Heart right ventricle (tissue), 16 donors: ENCODE measurements at regions of chr4 and their contacts with region 1.

Region 1: DNA sequence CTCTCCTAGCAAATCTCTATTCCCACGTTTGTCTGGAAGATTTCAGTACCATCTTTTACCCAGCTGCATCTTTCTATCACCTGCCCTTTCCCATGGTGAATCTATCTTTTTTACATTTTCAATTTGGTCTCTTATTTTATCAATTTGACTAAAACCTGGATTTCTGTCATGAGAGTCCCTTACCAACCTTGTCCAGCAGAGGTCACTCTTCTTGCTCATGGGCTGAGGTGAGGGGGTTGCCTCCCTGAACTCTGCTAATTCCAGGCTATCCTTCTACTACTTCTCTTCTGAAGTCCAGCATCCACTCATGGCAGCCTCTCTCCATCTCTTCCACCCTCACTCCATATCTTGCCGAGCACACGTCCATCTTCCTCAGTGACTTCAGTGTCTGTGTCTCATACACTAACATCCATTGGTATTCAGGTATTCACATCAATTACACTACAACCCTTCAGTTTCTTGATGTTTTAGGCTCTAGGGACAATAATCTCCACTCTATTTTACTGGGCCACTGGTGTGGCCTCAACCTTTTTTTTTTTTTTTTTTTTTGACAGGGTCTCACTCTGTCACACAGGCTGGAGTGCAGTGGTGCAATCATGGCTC is 17.8 kb upstream of the ZNF827 start:
- DNase-seq: peak in 1 of 2 donors; percentile 23
- ATAC-seq: peak in 2 of 8 donors; percentile 37 to 38
- H3K4me3 ChIP-seq: no peak overlapping the region
- H3K27ac ChIP-seq: no peak overlapping the region
- H3K4me1 ChIP-seq: no peaks in the 10 kb centered on the region
- H3K27me3 ChIP-seq: no peaks in the 10 kb centered on the region
- CTCF ChIP-seq: peak; percentile 53 to 82 (median 75)

Region 2: GRCh38 chr4:145912376-145912775 is 44.0 kb before region 1 on chr4:
- intact Hi-C with region 1: no loop called
- DNase-seq: no peak
- ATAC-seq: no peak
- H3K4me3 ChIP-seq: no peak overlapping the region
- H3K27ac ChIP-seq: no peak overlapping the region
- H3K4me1 ChIP-seq: peaks cover 5 to 52% (median 33%) of the 10 kb centered on the region in 9 donors
- H3K27me3 ChIP-seq: no peaks in the 10 kb centered on the region
- CTCF ChIP-seq: no peak

Region 3: GRCh38 chr4:146059865-146060264 is 103.5 kb after region 1 on chr4:
- intact Hi-C with region 1: no loop called
- DNase-seq: no peak
- ATAC-seq: no peak
- H3K4me3 ChIP-seq: no peak overlapping the region
- H3K27ac ChIP-seq: no peak overlapping the region
- H3K4me1 ChIP-seq: peaks cover 0 to 11% (median 0%) of the 10 kb centered on the region in 9 donors
- H3K27me3 ChIP-seq: peaks cover 0 to 13% (median 4%) of the 10 kb centered on the region in 7 donors
- CTCF ChIP-seq: no peak

Region 4: GRCh38 chr4:146087856-146088255 is 131.5 kb after region 1 on chr4:
- intact Hi-C with region 1: no loop called
- DNase-seq: no peak
- ATAC-seq: no peak
- H3K4me3 ChIP-seq: no peak overlapping the region
- H3K27ac ChIP-seq: no peak overlapping the region
- H3K4me1 ChIP-seq: no peaks in the 10 kb centered on the region
- H3K27me3 ChIP-seq: no peaks in the 10 kb centered on the region
- CTCF ChIP-seq: no peak

Region 5: DNA sequence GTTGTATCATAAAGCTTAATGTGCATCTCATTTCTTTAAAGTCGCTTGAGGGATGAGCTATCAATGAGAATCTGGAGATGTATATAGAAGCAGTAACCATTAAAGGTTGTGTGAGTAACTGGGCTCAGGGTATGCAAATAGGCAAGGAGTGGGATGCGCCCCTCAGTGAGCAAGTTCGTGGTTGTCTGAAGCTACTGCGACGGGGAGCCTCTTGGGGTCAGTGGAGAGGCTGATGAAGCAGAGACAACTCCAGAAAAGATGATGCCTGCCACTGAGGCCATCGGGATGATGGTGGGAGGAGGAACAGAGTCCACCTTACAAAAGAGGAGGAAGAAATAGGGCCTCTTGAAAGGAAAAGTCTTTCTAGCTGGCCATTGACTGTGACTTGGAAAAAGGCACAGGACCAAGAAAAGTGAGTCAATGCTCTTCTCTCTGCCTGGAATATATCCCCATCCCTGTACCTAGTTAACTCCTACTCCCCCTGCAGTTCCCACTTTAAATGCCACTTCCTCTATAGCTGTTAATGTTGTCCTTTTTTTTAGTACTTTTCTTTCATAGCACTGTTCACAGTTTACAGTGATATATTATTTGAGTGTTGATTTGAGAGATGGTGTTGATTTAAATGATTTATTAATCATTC is 167.8 kb after region 1 on chr4:
- intact Hi-C with region 1: no loop called
- DNase-seq: no peak
- ATAC-seq: no peak
- H3K4me3 ChIP-seq: no peak overlapping the region
- H3K27ac ChIP-seq: no peak overlapping the region
- H3K4me1 ChIP-seq: no peaks in the 10 kb centered on the region
- H3K27me3 ChIP-seq: no peaks in the 10 kb centered on the region
- CTCF ChIP-seq: no peak

Region 6: DNA sequence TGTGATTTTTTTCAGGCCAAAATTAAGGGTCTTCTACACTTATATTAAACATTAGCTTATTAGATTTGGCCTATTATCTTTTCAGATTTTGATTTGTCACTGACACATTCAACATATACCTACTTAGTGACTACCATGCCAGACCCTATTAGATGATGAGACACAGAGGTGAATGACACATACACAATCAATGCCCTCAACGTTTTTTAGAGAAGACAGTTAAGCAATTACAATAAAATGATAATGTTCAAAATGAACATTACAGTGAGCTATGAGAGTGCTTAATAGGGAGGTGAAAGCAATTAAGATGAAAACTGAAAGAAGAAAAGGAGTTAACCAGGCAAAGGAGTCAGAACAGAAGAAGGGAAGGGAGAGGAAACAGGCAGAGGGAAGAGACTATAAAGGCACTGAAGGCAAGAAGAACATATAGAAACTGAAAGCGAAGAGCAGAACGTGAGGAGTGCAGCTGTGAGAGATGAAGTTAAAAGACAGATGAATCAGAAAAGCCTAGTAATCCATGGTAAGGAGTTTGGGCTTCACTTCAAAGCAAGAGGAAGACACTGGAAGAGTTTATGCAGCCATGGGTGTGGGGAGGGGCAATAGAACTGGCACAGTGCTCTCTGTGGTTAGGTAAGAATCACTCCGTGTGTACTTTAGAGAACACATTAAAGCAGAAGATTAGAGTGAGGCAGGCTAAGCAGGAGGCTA is 377.0 kb after region 1 on chr4:
- intact Hi-C with region 1: loop called in 1 of 10 experiments (anchors 10 kb)
- DNase-seq: no peak
- ATAC-seq: no peak
- H3K4me3 ChIP-seq: no peak overlapping the region
- H3K27ac ChIP-seq: no peak overlapping the region
- H3K4me1 ChIP-seq: peaks cover 0 to 49% (median 3%) of the 10 kb centered on the region in 9 donors
- H3K27me3 ChIP-seq: no peaks in the 10 kb centered on the region
- CTCF ChIP-seq: no peak

Region 7: GRCh38 chr4:146916479-146917076 is 960.2 kb after region 1 on chr4:
- intact Hi-C with region 1: loop called in 3 of 10 experiments (anchors 10 kb)
- DNase-seq: no peak
- ATAC-seq: no peak
- H3K4me3 ChIP-seq: no peak overlapping the region
- H3K27ac ChIP-seq: no peak overlapping the region
- H3K4me1 ChIP-seq: no peaks in the 10 kb centered on the region
- H3K27me3 ChIP-seq: peaks cover 0 to 45% (median 29%) of the 10 kb centered on the region in 7 donors
- CTCF ChIP-seq: peak; percentile 57 to 85 (median 75)

Region 8: DNA sequence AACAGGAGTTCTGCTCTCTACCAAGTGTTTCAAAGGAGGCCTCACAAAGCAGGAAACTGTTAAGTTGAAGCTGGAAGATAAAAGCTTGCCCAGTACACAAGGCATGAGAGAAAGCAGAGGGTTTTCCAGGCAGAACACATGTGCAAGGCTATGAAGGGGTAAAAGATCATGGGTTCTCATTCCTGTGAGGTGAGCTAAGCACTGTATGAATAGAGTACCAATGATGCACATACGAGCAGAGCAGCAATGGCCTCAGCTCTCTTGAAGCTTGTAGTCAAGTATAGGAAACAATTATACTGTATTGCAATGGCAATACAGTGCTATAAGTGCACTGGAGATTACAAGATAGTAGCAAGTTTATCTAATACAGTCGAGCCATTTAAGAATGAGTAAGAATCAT is 971.3 kb after region 1 on chr4:
- intact Hi-C with region 1: loop called in 1 of 10 experiments (anchors 10 kb)
- DNase-seq: no peak
- ATAC-seq: no peak
- H3K4me3 ChIP-seq: no peak overlapping the region
- H3K27ac ChIP-seq: no peak overlapping the region
- H3K4me1 ChIP-seq: no peaks in the 10 kb centered on the region
- H3K27me3 ChIP-seq: peaks cover 0 to 13% (median 0%) of the 10 kb centered on the region in 7 donors
- CTCF ChIP-seq: no peak